Activated CD4-positive, alpha-beta T cell treated with anti-CD3 and anti-CD28 coated beads for 36 hours (primary cell): ENCODE measurements at regions of chr1 and their contacts with region 1.

Region 1: DNA sequence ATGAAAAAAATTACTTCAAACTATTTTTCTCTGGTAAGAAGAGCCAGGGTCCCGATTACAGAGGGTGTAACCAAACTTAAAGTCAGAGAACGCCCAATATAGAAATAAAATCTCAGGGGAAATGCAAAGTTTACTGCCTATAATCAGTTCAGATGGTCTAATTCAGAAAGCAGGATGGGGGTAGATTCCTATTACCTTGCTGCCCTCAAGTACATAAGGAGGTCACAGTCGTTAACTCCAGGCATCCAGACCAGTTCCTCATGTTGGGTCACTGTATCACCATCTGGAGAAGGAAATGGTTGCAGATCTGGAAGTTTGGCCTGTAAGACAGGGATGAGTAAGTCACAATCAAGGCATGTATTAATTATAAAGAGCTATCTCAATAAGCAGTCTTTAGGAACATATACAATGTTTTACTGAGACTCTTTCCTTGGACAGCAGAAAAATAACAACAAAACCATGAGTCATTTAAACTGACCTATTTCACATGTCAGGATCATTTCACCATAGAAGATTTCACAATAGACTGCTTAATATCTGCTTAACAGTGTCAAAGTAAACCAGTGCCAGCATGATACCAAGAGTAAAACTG is 179.4 kb downstream of the SLC45A1 start:
- DNase-seq: no peak
- ATAC-seq: no peak
- H3K4me3 Mint-ChIP-seq: no peak overlapping the region
- H3K27ac Mint-ChIP-seq: no peak overlapping the region
- H3K4me1 Mint-ChIP-seq: peaks cover 29% of the 10 kb centered on the region
- H3K27me3 Mint-ChIP-seq: no peaks in the 10 kb centered on the region

Region 2: DNA sequence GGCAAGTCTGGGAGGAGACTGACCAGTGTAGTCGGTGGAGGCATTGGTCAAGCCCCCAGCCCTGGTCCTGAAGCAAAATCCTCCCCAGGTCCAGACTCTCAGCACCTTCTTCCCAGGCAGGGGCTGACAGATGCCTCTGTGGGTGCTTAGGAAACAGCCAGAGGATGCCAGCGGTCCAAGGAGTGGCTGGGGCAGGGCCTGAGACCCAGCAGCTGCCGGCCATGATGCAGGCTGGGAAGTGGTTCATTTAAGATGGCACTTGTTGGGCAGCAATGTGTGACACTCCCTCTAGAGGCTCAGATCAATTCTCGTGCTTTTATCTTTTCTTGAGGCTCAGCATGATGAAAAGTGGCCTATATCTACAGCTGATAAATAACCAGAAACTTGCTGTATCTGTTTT is 891.2 kb before region 1 on chr1:
- CTCF ChIA-PET with region 1: no interaction called
- POLR2A ChIA-PET with region 1: no interaction called
- intact Hi-C with region 1: no loop called
- DNase-seq: no peak
- ATAC-seq: no peak
- H3K4me3 Mint-ChIP-seq: no peak overlapping the region
- H3K27ac Mint-ChIP-seq: no peak overlapping the region
- H3K4me1 Mint-ChIP-seq: no peaks in the 10 kb centered on the region
- H3K27me3 Mint-ChIP-seq: peaks cover 18% of the 10 kb centered on the region

Region 3: DNA sequence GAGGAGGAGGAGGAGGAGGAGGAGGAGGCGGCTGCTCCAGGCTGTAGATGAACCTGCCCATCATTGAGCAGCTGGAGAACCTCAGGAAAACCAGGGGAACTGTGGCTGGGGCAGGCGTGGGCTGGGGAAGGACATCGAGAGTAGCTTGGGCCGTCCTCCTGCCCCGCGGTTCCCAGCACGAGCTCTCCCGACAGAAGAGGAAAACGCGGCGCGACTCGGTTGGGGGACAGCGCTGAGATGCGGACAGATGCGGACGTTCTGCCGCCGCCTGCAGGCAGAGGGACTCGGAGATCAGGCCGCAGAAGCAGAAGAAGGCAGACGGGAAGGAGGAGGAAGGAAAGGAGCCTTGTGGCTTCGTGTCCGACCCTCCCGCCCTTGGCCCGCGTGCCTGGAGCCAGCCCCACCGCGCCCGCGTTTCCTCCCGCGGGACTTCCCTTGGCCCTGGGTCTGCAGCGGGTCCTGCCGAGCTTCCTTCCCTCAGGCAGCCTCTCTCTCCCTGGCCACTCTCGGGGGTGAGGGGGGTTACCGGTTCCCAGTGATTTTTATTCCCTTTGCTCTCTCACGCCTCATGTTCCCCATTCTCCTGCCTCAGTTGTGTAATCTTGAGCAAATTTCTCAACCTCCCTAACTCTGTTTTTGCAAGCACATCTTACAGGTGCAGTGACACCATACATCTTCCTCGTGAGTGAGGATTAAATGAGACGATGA is 554.9 kb before region 1 on chr1:
- CTCF ChIA-PET with region 1: no interaction called
- POLR2A ChIA-PET with region 1: no interaction called
- intact Hi-C with region 1: no loop called
- DNase-seq: peak; percentile 57
- ATAC-seq: peak; percentile 25
- H3K4me3 Mint-ChIP-seq: peak overlapping the region; percentile 66
- H3K27ac Mint-ChIP-seq: peak overlapping the region; percentile 73
- H3K4me1 Mint-ChIP-seq: peaks cover 47% of the 10 kb centered on the region
- H3K27me3 Mint-ChIP-seq: peaks cover 28% of the 10 kb centered on the region

Region 4: GRCh38 chr1:8396786-8397406 is 100.4 kb before region 1 on chr1:
- CTCF ChIA-PET with region 1: no interaction called
- POLR2A ChIA-PET with region 1: no interaction called
- intact Hi-C with region 1: loop called in 1 of 2 experiments (anchors 1 kb)
- DNase-seq: peak; percentile 68
- ATAC-seq: peak; percentile 84
- H3K4me3 Mint-ChIP-seq: peak overlapping the region; percentile 25
- H3K27ac Mint-ChIP-seq: peak overlapping the region; percentile 81
- H3K4me1 Mint-ChIP-seq: peaks cover 72% of the 10 kb centered on the region
- H3K27me3 Mint-ChIP-seq: no peaks in the 10 kb centered on the region

Region 5: GRCh38 chr1:8477166-8477982 is 19.9 kb before region 1 on chr1:
- CTCF ChIA-PET with region 1: interaction called, 5 read pairs
- POLR2A ChIA-PET with region 1: no interaction called
- intact Hi-C with region 1: loop called in 1 of 2 experiments (anchors 1 kb)
- DNase-seq: peak; percentile 45
- ATAC-seq: peak; percentile 77
- H3K4me3 Mint-ChIP-seq: no peak overlapping the region
- H3K27ac Mint-ChIP-seq: peak overlapping the region; percentile 85
- H3K4me1 Mint-ChIP-seq: peaks cover 49% of the 10 kb centered on the region
- H3K27me3 Mint-ChIP-seq: no peaks in the 10 kb centered on the region

Region 6: GRCh38 chr1:8510041-8510823 is 12.9 kb after region 1 on chr1:
- CTCF ChIA-PET with region 1: interaction called, 6 read pairs
- POLR2A ChIA-PET with region 1: no interaction called
- intact Hi-C with region 1: loop called in 1 of 2 experiments (anchors 1 kb)
- DNase-seq: peak; percentile 71
- ATAC-seq: peak; percentile 82
- H3K4me3 Mint-ChIP-seq: peak overlapping the region; percentile 63
- H3K27ac Mint-ChIP-seq: peak overlapping the region; percentile 93
- H3K4me1 Mint-ChIP-seq: peaks cover 49% of the 10 kb centered on the region
- H3K27me3 Mint-ChIP-seq: no peaks in the 10 kb centered on the region

Region 7: DNA sequence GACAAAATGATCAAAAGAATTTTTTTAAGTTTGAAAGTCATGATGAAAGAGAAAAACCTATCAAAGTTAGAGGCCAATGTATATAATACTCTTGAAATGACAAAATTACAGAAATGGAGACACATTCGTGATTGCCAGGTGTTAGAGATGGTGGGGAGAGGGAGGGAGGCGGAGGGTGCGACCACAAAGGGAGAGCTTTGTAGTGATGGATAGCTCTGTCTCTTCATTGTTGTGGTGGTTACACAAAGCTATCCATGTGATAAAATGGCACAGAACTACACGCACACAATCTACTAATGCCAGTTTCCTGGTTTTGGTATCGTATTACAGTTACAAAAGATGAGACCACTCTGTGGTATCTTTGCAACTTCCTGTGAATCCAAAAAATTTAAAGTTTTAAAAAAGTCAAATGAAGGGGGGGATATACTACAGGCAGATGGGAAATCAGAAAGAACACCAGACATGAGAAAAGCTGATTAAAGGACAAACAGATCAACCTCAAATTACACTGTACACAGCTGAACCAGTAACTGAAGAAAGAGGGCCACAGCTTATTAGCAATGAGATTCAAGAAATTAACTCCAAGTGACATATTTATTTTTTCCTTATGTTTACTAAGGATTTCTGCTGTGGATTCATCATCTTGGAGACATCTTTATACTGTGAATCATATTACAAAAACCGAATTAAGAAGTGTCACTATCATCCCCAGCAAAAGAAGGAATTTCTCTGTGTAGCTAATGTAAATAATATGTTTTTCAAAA is 19.7 kb after region 1 on chr1:
- CTCF ChIA-PET with region 1: interaction called, 6 read pairs
- POLR2A ChIA-PET with region 1: interaction called, 4 read pairs
- intact Hi-C with region 1: loop called in 1 of 2 experiments (anchors 2 kb)
- DNase-seq: peak; percentile 64
- ATAC-seq: peak; percentile 70
- H3K4me3 Mint-ChIP-seq: peak overlapping the region; percentile 30
- H3K27ac Mint-ChIP-seq: peak overlapping the region; percentile 78
- H3K4me1 Mint-ChIP-seq: peaks cover 58% of the 10 kb centered on the region
- H3K27me3 Mint-ChIP-seq: no peaks in the 10 kb centered on the region